B cell (primary cell): ENCODE measurements at regions of chr2 and their contacts with region 1.

Region 1: DNA sequence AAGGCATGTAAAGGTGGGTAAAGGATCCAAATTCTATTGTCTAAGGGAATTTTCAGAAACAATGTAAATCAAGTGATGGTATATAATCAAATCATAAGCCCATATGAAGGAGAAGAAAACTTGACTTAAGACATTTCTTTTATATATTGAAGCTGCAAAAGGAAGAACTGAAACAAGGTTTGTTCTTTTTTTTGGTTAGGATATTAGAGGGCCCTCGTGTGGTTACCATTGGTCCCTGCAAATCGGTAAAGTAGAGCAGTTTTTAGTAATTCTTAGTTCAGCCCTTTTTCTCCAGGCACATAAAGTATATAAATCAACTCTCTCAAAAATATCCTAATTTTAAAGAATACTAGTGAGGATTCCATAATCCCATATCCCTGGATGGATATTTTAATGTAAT is 105.6 kb upstream of the STK17B start:
- DNase-seq: peak; percentile 81
- ATAC-seq: peak; percentile 48
- H3K4me3 ChIP-seq: peak overlapping the region in 2 of 5 experiments; percentile 7 to 50
- H3K4me3 Mint-ChIP-seq: no peak overlapping the region
- H3K27ac ChIP-seq: peak overlapping the region; percentile 19 to 85
- H3K27ac Mint-ChIP-seq: peak overlapping the region; percentile 95
- H3K4me1 ChIP-seq: peaks cover 43% of the 10 kb centered on the region in 2 donors
- H3K4me1 Mint-ChIP-seq: peaks cover 43% of the 10 kb centered on the region
- H3K27me3 ChIP-seq: no peaks in the 10 kb centered on the region
- H3K27me3 Mint-ChIP-seq: no peaks in the 10 kb centered on the region
- CTCF ChIP-seq: peak; percentile 82

Region 2: GRCh38 chr2:196076778-196077568 is 200.0 kb before region 1 on chr2:
- CTCF ChIA-PET with region 1: interaction called, 87 read pairs
- POLR2A ChIA-PET with region 1: interaction called, 5 read pairs
- intact Hi-C with region 1: loop called (anchors 1 kb)
- DNase-seq: no peak
- ATAC-seq: no peak
- H3K4me3 ChIP-seq: no peak overlapping the region
- H3K4me3 Mint-ChIP-seq: no peak overlapping the region
- H3K27ac ChIP-seq: no peak overlapping the region
- H3K27ac Mint-ChIP-seq: no peak overlapping the region
- H3K4me1 ChIP-seq: peaks cover 13 to 17% of the 10 kb centered on the region in 2 donors
- H3K4me1 Mint-ChIP-seq: peaks cover 21% of the 10 kb centered on the region
- H3K27me3 ChIP-seq: no peaks in the 10 kb centered on the region
- H3K27me3 Mint-ChIP-seq: no peaks in the 10 kb centered on the region
- CTCF ChIP-seq: no peak

Region 3: GRCh38 chr2:196143730-196144131 is 133.3 kb before region 1 on chr2:
- CTCF ChIA-PET with region 1: interaction called, 15 read pairs
- POLR2A ChIA-PET with region 1: interaction called, 7 read pairs
- intact Hi-C with region 1: no loop called
- DNase-seq: no peak
- ATAC-seq: no peak
- H3K4me3 ChIP-seq: no peak overlapping the region
- H3K4me3 Mint-ChIP-seq: no peak overlapping the region
- H3K27ac ChIP-seq: peak overlapping the region in 1 of 2 donors; percentile 58
- H3K27ac Mint-ChIP-seq: peak overlapping the region; percentile 57
- H3K4me1 ChIP-seq: peaks cover 20 to 28% of the 10 kb centered on the region in 2 donors
- H3K4me1 Mint-ChIP-seq: peaks cover 39% of the 10 kb centered on the region
- H3K27me3 ChIP-seq: no peaks in the 10 kb centered on the region
- H3K27me3 Mint-ChIP-seq: no peaks in the 10 kb centered on the region
- CTCF ChIP-seq: no peak

Region 4: DNA sequence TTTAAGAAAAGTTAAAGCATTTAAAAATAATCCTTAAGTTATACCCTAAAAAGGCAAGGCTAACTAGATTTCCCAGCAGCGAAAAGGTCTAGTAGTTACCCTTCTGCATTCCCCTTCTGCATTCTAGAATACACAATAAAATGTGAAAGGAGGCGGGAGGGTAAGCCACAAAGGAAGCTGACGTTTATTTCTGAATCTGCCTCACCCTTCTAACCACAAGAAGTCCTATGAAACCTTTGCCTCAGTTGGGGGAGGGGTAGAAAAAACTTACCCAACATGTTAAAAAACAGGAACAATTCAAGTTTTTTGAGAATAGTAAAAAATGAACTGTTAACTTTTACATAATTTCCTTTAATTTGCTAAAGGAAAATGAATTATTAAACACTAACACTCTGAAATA is 116.9 kb before region 1 on chr2:
- CTCF ChIA-PET with region 1: interaction called, 109 read pairs
- POLR2A ChIA-PET with region 1: interaction called, 26 read pairs
- intact Hi-C with region 1: loop called (anchors 2 kb)
- DNase-seq: peak; percentile 92
- ATAC-seq: peak; percentile 82
- H3K4me3 ChIP-seq: peak overlapping the region in 3 of 5 experiments; percentile 8 to 65 (median 13)
- H3K4me3 Mint-ChIP-seq: peak overlapping the region; percentile 56
- H3K27ac ChIP-seq: peak overlapping the region; percentile 47 to 96
- H3K27ac Mint-ChIP-seq: peak overlapping the region; percentile 82
- H3K4me1 ChIP-seq: peaks cover 56 to 93% of the 10 kb centered on the region in 2 donors
- H3K4me1 Mint-ChIP-seq: peaks cover 66% of the 10 kb centered on the region
- H3K27me3 ChIP-seq: no peaks in the 10 kb centered on the region
- H3K27me3 Mint-ChIP-seq: no peaks in the 10 kb centered on the region
- CTCF ChIP-seq: no peak

Region 5: GRCh38 chr2:196200557-196200956 is 76.4 kb before region 1 on chr2:
- CTCF ChIA-PET with region 1: interaction called, 11 read pairs
- POLR2A ChIA-PET with region 1: no interaction called
- intact Hi-C with region 1: no loop called
- DNase-seq: peak; percentile 51
- ATAC-seq: peak; percentile 79
- H3K4me3 ChIP-seq: peak overlapping the region in 2 of 5 experiments; percentile 2 to 32
- H3K4me3 Mint-ChIP-seq: peak overlapping the region; percentile 70
- H3K27ac ChIP-seq: peak overlapping the region in 1 of 2 donors; percentile 47
- H3K27ac Mint-ChIP-seq: peak overlapping the region; percentile 79
- H3K4me1 ChIP-seq: peaks cover 12 to 18% of the 10 kb centered on the region in 2 donors
- H3K4me1 Mint-ChIP-seq: peaks cover 38% of the 10 kb centered on the region
- H3K27me3 ChIP-seq: no peaks in the 10 kb centered on the region
- H3K27me3 Mint-ChIP-seq: no peaks in the 10 kb centered on the region
- CTCF ChIP-seq: no peak

Region 6: GRCh38 chr2:196225213-196225612 is 51.8 kb before region 1 on chr2:
- CTCF ChIA-PET with region 1: interaction called, 12 read pairs
- POLR2A ChIA-PET with region 1: no interaction called
- intact Hi-C with region 1: no loop called
- DNase-seq: no peak
- ATAC-seq: no peak
- H3K4me3 ChIP-seq: no peak overlapping the region
- H3K4me3 Mint-ChIP-seq: no peak overlapping the region
- H3K27ac ChIP-seq: no peak overlapping the region
- H3K27ac Mint-ChIP-seq: no peak overlapping the region
- H3K4me1 ChIP-seq: peaks cover 25 to 28% of the 10 kb centered on the region in 2 donors
- H3K4me1 Mint-ChIP-seq: peaks cover 66% of the 10 kb centered on the region
- H3K27me3 ChIP-seq: no peaks in the 10 kb centered on the region
- H3K27me3 Mint-ChIP-seq: no peaks in the 10 kb centered on the region
- CTCF ChIP-seq: no peak

Region 7: GRCh38 chr2:196239622-196240587 is 37.1 kb before region 1 on chr2:
- CTCF ChIA-PET with region 1: interaction called, 71 read pairs
- POLR2A ChIA-PET with region 1: interaction called, 6 read pairs
- intact Hi-C with region 1: loop called (anchors 1 kb)
- DNase-seq: peak; percentile 90
- ATAC-seq: peak; percentile 68
- H3K4me3 ChIP-seq: peak overlapping the region in 2 of 5 experiments; percentile 23 to 36
- H3K4me3 Mint-ChIP-seq: peak overlapping the region; percentile 74
- H3K27ac ChIP-seq: peak overlapping the region; percentile 91 to 92
- H3K27ac Mint-ChIP-seq: peak overlapping the region; percentile 100
- H3K4me1 ChIP-seq: peaks cover 72 to 84% of the 10 kb centered on the region in 2 donors
- H3K4me1 Mint-ChIP-seq: peaks cover 77% of the 10 kb centered on the region
- H3K27me3 ChIP-seq: no peaks in the 10 kb centered on the region
- H3K27me3 Mint-ChIP-seq: no peaks in the 10 kb centered on the region
- CTCF ChIP-seq: peak; percentile 16

Region 8: GRCh38 chr2:196331143-196331542 is 54.1 kb after region 1 on chr2:
- CTCF ChIA-PET with region 1: no interaction called
- POLR2A ChIA-PET with region 1: no interaction called
- intact Hi-C with region 1: no loop called
- DNase-seq: no peak
- ATAC-seq: no peak
- H3K4me3 ChIP-seq: no peak overlapping the region
- H3K4me3 Mint-ChIP-seq: no peak overlapping the region
- H3K27ac ChIP-seq: no peak overlapping the region
- H3K27ac Mint-ChIP-seq: no peak overlapping the region
- H3K4me1 ChIP-seq: no peaks in the 10 kb centered on the region
- H3K4me1 Mint-ChIP-seq: peaks cover 6% of the 10 kb centered on the region
- H3K27me3 ChIP-seq: no peaks in the 10 kb centered on the region
- H3K27me3 Mint-ChIP-seq: peaks cover 5% of the 10 kb centered on the region
- CTCF ChIP-seq: no peak

Region 9: DNA sequence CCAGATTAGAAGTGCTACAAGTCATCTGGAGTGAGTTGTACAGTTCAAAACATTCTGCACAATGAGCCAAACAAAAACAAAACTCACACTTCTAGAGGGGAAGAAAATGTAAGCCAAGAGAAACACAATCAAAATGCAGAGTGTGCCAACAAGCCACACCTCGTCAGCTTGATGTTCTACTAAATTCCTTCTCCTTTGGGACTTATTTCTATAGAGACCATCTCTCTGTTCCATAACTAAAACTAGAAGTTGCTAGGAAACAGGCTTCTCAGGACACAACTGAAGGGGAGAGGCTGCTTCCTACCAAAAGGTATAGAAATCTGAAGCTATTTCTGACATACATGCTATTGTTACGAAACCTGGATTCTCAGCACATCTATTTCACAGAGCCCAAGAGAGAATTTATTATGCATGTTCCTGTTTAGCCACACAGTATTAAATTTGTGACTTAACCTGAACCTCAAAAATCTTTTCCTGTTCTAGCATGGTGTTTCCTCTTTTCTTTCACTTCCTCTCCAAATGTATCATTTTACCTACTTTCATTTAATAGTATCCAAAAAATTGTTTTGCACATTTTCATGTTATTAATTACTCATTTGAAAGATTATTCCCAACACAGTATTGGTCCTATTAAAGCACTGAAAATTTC is 151.1 kb after region 1 on chr2:
- CTCF ChIA-PET with region 1: no interaction called
- POLR2A ChIA-PET with region 1: no interaction called
- intact Hi-C with region 1: no loop called
- DNase-seq: peak; percentile 12
- ATAC-seq: no peak
- H3K4me3 ChIP-seq: no peak overlapping the region
- H3K4me3 Mint-ChIP-seq: peak overlapping the region; percentile 53
- H3K27ac ChIP-seq: peak overlapping the region in 1 of 2 donors; percentile 29
- H3K27ac Mint-ChIP-seq: no peak overlapping the region
- H3K4me1 ChIP-seq: peaks cover 11 to 21% of the 10 kb centered on the region in 2 donors
- H3K4me1 Mint-ChIP-seq: peaks cover 23% of the 10 kb centered on the region
- H3K27me3 ChIP-seq: no peaks in the 10 kb centered on the region
- H3K27me3 Mint-ChIP-seq: peaks cover 2% of the 10 kb centered on the region
- CTCF ChIP-seq: no peak